Activated CD4-positive, alpha-beta T cell treated with anti-CD3 and anti-CD28 coated beads for 36 hours (primary cell): ENCODE measurements at regions of chr12 and their contacts with region 1.

Region 1: DNA sequence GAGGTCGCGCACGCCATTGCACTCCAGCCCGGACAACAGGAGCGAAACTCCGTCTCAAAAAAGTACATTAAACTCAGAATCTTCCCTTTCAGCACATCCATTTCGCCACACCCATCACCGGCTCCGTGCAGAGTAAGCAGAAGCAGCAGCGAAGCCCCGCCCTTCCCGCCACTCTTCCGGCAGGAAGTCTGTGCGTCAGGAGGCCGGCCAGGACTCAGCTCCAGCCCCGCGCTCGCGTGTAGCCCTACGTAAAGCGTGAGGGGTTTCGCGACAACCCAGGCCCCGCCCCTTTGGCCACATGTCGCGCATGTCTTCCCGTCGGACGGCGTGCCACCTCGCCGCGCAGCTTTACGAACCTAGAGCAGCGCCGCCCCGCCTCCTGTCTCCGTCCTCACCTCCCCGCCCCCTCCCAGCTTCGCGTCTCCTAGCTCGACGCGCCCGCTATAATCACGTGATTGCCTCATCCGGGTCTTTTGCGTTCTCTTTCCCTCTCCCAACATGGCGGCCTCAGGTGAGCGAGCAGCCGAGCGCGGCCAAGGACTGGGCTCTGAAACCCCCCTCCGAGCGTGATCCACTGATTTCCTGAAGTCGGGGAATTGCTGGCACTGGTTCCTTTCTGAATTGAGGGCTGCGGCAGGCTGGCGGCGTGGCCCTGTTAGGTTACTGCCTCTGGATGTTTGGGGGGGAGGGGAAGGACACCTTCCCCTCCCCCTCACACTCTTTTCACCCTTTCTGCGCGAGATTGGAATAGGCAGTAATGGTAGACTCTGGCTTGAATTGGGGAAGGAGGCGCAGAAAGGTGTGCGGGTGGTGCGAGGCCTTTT is at the start of gene EIF4B:
- DNase-seq: peak; percentile 100
- ATAC-seq: peak; percentile 93
- H3K4me3 Mint-ChIP-seq: peak within 1 kb of the TSS; percentile 96
- H3K27ac Mint-ChIP-seq: peak within 1 kb of the TSS; percentile 99
- H3K4me1 Mint-ChIP-seq: peaks cover 40% of the 10 kb centered on the region
- H3K27me3 Mint-ChIP-seq: no peaks in the 10 kb centered on the region
- total RNA-seq, gene EIF4B: 698 to 781 TPM

Region 2: GRCh38 chr12:52050761-52051541 is 955.2 kb before region 1 on chr12 and contains the start of gene NR4A1:
- CTCF ChIA-PET with region 1: no interaction called
- POLR2A ChIA-PET with region 1: no interaction called
- intact Hi-C with region 1: loop called in 1 of 2 experiments (anchors 1 kb)
- DNase-seq: peak; percentile 100
- ATAC-seq: peak; percentile 88
- H3K4me3 Mint-ChIP-seq: peak within 1 kb of the TSS; percentile 92
- H3K27ac Mint-ChIP-seq: peak within 1 kb of the TSS; percentile 91
- H3K4me1 Mint-ChIP-seq: peaks cover 38% of the 10 kb centered on the region
- H3K27me3 Mint-ChIP-seq: no peaks in the 10 kb centered on the region
- total RNA-seq, gene NR4A1: 69.4 to 72.8 TPM

Region 3: DNA sequence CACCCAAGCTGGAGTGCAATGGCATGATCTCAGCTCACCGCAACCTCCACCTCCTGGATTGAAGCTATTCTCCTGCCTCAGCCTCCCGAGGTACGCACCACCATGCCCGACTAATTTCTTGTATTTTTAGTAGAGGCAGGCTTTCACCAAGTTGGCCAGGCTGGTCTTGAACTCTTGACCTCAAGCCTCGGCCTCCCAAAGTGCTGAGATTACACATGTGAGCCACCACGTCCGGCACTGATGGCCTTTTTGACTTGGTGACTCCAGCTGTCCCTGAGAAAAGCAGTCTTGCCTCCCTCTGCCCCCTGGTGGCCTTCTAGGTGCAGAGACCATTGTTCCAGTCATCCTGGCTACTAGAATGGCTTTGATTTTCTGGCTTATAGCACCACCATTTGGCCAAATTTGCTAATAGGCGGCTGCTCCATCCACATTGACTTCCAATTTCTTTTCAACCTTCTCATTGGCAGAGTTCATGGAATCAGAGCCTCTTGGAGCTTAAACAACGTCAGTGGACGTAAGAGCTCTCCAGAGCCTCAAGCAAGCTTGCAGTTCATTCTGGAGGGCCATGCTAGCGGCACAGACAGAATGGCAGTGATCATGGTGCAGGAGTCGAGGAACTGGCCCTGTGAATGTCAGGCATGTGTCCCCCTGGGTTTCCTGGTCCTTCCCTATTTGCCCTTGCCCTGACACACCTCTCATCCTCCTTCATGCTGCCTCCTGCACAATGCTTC is 25.3 kb before region 1 on chr12:
- CTCF ChIA-PET with region 1: interaction called, 12 read pairs
- POLR2A ChIA-PET with region 1: no interaction called
- intact Hi-C with region 1: no loop called
- DNase-seq: peak; percentile 89
- ATAC-seq: peak; percentile 95
- H3K4me3 Mint-ChIP-seq: no peak overlapping the region
- H3K27ac Mint-ChIP-seq: no peak overlapping the region
- H3K4me1 Mint-ChIP-seq: no peaks in the 10 kb centered on the region
- H3K27me3 Mint-ChIP-seq: peaks cover 26% of the 10 kb centered on the region

Region 4: DNA sequence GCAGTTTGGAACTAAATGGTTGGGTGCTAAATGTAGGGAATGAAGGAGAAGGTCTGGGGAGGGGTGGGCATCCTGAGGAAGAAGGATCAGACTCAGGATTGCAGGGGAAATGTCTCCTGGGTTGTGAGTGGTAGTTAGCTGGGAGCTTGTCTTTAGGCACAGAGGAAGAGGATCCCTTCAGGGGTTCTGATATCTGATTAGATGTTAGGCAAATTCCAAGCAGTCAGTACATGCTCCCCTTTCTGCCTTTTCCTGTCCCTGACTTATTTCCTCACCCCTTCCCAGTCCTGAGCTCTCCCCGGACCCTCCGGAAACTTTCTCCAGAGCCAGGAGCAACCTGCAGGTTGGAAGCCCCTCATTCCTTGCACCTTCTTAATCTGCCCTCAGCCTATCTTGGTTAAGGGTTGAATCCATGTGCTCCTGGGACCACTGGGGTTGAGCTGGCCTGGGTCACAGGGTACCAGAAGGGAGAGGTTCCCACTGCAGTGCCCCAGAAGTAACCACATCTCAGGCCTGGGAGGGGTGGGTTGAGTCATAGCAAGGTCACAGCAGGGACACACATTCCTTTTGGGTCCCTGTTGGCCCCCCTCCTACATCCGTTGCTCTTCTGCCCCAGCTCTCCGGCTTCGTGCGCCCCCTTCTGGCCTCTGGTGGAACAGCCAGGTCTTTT is 92.9 kb after region 1 on chr12:
- CTCF ChIA-PET with region 1: interaction called, 3 read pairs
- POLR2A ChIA-PET with region 1: no interaction called
- intact Hi-C with region 1: loop called in 1 of 2 experiments (anchors 1 kb)
- DNase-seq: peak; percentile 95
- ATAC-seq: peak; percentile 59
- H3K4me3 Mint-ChIP-seq: peak overlapping the region; percentile 72
- H3K27ac Mint-ChIP-seq: peak overlapping the region; percentile 89
- H3K4me1 Mint-ChIP-seq: peaks cover 43% of the 10 kb centered on the region
- H3K27me3 Mint-ChIP-seq: peaks cover 12% of the 10 kb centered on the region

Region 5: GRCh38 chr12:53279888-53280498 is 273.8 kb after region 1 on chr12:
- CTCF ChIA-PET with region 1: no interaction called
- POLR2A ChIA-PET with region 1: no interaction called
- intact Hi-C with region 1: no loop called
- DNase-seq: no peak
- ATAC-seq: no peak
- H3K4me3 Mint-ChIP-seq: no peak overlapping the region
- H3K27ac Mint-ChIP-seq: no peak overlapping the region
- H3K4me1 Mint-ChIP-seq: no peaks in the 10 kb centered on the region
- H3K27me3 Mint-ChIP-seq: no peaks in the 10 kb centered on the region

Region 6: GRCh38 chr12:53295070-53295890 is 289.1 kb after region 1 on chr12 and contains the start of gene PFDN5:
- CTCF ChIA-PET with region 1: no interaction called
- POLR2A ChIA-PET with region 1: no interaction called
- intact Hi-C with region 1: loop called (anchors 1 to 2 kb)
- DNase-seq: peak; percentile 93
- ATAC-seq: peak; percentile 88
- H3K4me3 Mint-ChIP-seq: peak within 1 kb of the TSS; percentile 85
- H3K27ac Mint-ChIP-seq: peak within 1 kb of the TSS; percentile 94
- H3K4me1 Mint-ChIP-seq: peaks cover 52% of the 10 kb centered on the region
- H3K27me3 Mint-ChIP-seq: no peaks in the 10 kb centered on the region
- total RNA-seq, gene PFDN5: 253 to 322 TPM

Region 7: GRCh38 chr12:53500776-53501614 is 494.8 kb after region 1 on chr12 and contains the start of gene TARBP2:
- CTCF ChIA-PET with region 1: no interaction called
- POLR2A ChIA-PET with region 1: interaction called, 6 read pairs
- intact Hi-C with region 1: loop called in 1 of 2 experiments (anchors 1 kb)
- DNase-seq: peak; percentile 98
- ATAC-seq: peak; percentile 84
- H3K4me3 Mint-ChIP-seq: peak within 1 kb of the TSS; percentile 81
- H3K27ac Mint-ChIP-seq: peak within 1 kb of the TSS; percentile 98
- H3K4me1 Mint-ChIP-seq: peaks cover 31% of the 10 kb centered on the region
- H3K27me3 Mint-ChIP-seq: no peaks in the 10 kb centered on the region
- total RNA-seq, gene TARBP2: 28.3 to 30.2 TPM